ENCODE measurements at regions of chr18 and their contacts with region 1.

Region 1: GRCh38 chr18:63237881-63238667 is 81.5 kb downstream of the BCL2 start:
- DNase-seq: no peak
- ATAC-seq: no peak
- H3K4me3 ChIP-seq: no peak overlapping the region
- H3K4me3 Mint-ChIP-seq: no peak overlapping the region
- H3K27ac ChIP-seq: no peak overlapping the region
- H3K27ac Mint-ChIP-seq: peak overlapping the region in 1 of 2 donors; percentile 60
- H3K4me1 ChIP-seq: peaks cover 6% of the 10 kb centered on the region
- H3K4me1 Mint-ChIP-seq: peaks cover 29 to 33% of the 10 kb centered on the region in 2 donors
- H3K27me3 ChIP-seq: no peaks in the 10 kb centered on the region
- H3K27me3 Mint-ChIP-seq: no peaks in the 10 kb centered on the region
- CTCF ChIP-seq: no peak

Region 2: GRCh38 chr18:63180971-63181376 is 57.1 kb before region 1 on chr18:
- intact Hi-C with region 1: loop called (anchors 10 kb)
- DNase-seq: no peak
- ATAC-seq: no peak
- H3K4me3 ChIP-seq: no peak overlapping the region
- H3K4me3 Mint-ChIP-seq: no peak overlapping the region
- H3K27ac ChIP-seq: no peak overlapping the region
- H3K27ac Mint-ChIP-seq: no peak overlapping the region
- H3K4me1 ChIP-seq: peaks cover 22% of the 10 kb centered on the region
- H3K4me1 Mint-ChIP-seq: peaks cover 27 to 43% of the 10 kb centered on the region in 2 donors
- H3K27me3 ChIP-seq: no peaks in the 10 kb centered on the region
- H3K27me3 Mint-ChIP-seq: no peaks in the 10 kb centered on the region
- CTCF ChIP-seq: no peak

Region 3: GRCh38 chr18:63410792-63411191 is 172.7 kb after region 1 on chr18:
- intact Hi-C with region 1: no loop called
- DNase-seq: no peak
- ATAC-seq: no peak
- H3K4me3 ChIP-seq: no peak overlapping the region
- H3K4me3 Mint-ChIP-seq: no peak overlapping the region
- H3K27ac ChIP-seq: no peak overlapping the region
- H3K27ac Mint-ChIP-seq: no peak overlapping the region
- H3K4me1 ChIP-seq: no peaks in the 10 kb centered on the region
- H3K4me1 Mint-ChIP-seq: peaks cover 30 to 51% of the 10 kb centered on the region in 2 donors
- H3K27me3 ChIP-seq: no peaks in the 10 kb centered on the region
- H3K27me3 Mint-ChIP-seq: no peaks in the 10 kb centered on the region
- CTCF ChIP-seq: no peak

Region 4: DNA sequence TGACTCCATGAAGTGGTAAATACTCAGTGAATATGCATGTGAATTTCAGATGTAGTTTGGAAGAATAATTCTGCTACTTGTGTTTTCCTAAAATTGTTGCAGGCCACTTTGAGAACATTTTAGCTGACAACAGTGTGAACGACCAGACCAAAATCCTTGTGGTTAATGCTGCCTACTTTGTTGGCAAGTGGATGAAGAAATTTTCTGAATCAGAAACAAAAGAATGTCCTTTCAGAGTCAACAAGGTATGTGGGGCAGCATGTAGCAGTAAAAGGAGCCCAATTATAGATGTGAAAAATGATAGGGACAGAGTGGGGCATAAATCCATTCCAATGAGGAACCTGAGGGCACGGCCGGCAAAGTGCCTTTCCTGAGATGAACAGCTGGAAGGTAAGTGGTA is 254.8 kb after region 1 on chr18:
- intact Hi-C with region 1: no loop called
- DNase-seq: no peak
- ATAC-seq: no peak
- H3K4me3 ChIP-seq: no peak overlapping the region
- H3K4me3 Mint-ChIP-seq: no peak overlapping the region
- H3K27ac ChIP-seq: no peak overlapping the region
- H3K27ac Mint-ChIP-seq: no peak overlapping the region
- H3K4me1 ChIP-seq: no peaks in the 10 kb centered on the region
- H3K4me1 Mint-ChIP-seq: no peaks in the 10 kb centered on the region
- H3K27me3 ChIP-seq: no peaks in the 10 kb centered on the region
- H3K27me3 Mint-ChIP-seq: no peaks in the 10 kb centered on the region
- CTCF ChIP-seq: no peak